Activated naive CD4-positive, alpha-beta T cell treated with anti-CD3 and anti-CD28 coated beads for 36 hours (primary cell): ENCODE measurements at regions of chr19 and their contacts with region 1.

Region 1: GRCh38 chr19:4139614-4140236 is 13.7 kb upstream of the CREB3L3 start:
- DNase-seq: peak; percentile 95
- H3K4me3 Mint-ChIP-seq: peak overlapping the region; percentile 30
- H3K27ac Mint-ChIP-seq: no peak overlapping the region
- H3K4me1 Mint-ChIP-seq: peaks cover 8% of the 10 kb centered on the region
- H3K27me3 Mint-ChIP-seq: peaks cover 2% of the 10 kb centered on the region

Region 2: DNA sequence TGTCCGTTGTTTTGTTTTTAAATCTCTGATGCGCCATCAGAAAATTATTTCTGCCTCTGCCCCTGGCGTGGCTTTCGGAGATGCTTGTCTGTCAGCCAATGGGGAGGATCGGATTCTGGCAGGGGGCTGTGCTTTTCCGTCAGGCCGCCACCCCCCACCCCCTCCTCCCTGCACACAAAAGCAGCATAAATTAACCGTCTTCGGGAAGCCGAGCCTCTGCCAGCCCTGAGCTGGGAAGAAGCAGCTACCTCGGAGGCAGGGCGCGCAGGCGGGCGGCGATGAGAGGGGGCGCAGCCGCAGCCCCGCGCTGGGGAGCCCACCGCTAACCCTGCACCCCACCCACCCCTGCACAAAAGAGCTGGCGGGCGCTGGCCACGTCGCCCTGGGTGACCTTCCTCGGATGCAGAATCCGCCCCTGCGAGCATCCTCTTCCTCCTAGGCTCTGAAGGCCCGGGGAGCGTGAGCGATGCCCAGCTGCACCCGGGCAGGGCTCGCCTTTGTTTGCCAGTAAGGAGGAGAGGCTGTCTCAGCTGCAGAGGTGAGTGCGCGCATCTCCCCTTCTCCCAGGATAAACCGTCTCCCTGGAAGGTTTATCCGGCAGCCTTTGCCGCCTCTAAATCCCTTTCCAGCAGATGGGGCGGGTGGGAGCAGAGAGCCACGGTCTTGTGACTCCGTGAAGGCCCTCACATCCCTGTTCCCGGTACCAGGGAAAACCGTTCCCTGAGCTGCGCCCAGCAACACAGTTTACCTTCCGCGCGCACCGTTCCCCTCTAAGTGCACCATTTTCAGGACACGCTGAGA is 259.1 kb before region 1 on chr19 and contains the start of gene ATCAY:
- CTCF ChIA-PET with region 1: no interaction called
- intact Hi-C with region 1: no loop called
- DNase-seq: no peak
- H3K4me3 Mint-ChIP-seq: no peak within 1 kb of the TSS
- H3K27ac Mint-ChIP-seq: no peak within 1 kb of the TSS
- H3K4me1 Mint-ChIP-seq: peaks cover 12% of the 10 kb centered on the region
- H3K27me3 Mint-ChIP-seq: peaks cover 40% of the 10 kb centered on the region
- total RNA-seq, gene ATCAY: 0.07 TPM in 1 of 2 experiments, not detected in the other

Region 3: DNA sequence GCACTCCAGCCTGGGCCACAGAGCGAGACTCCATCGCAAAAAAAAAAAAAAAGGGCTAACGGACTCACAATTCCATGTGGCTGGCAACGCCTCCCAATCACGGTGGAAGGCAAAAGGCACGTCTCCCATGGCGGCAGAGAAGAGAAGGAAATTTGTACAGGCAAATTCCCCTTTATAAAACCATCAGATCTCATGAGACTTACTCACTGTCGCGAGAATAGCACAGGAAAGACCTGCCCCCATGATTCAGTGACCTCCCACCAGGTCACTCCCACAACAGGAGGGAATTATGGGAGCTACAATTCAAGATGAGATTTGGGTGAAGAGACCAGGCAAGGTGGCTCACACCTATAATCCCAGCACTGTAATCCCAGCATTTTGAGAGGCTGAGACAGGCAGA is 225.5 kb before region 1 on chr19:
- CTCF ChIA-PET with region 1: no interaction called
- intact Hi-C with region 1: no loop called
- DNase-seq: no peak
- H3K4me3 Mint-ChIP-seq: no peak overlapping the region
- H3K27ac Mint-ChIP-seq: no peak overlapping the region
- H3K4me1 Mint-ChIP-seq: no peaks in the 10 kb centered on the region
- H3K27me3 Mint-ChIP-seq: peaks cover 4% of the 10 kb centered on the region

Region 4: GRCh38 chr19:4007021-4007835 is 132.5 kb before region 1 on chr19 and contains the start of gene PIAS4:
- CTCF ChIA-PET with region 1: interaction called, 12 read pairs
- intact Hi-C with region 1: no loop called
- DNase-seq: peak; percentile 96
- H3K4me3 Mint-ChIP-seq: peak within 1 kb of the TSS; percentile 84
- H3K27ac Mint-ChIP-seq: peak within 1 kb of the TSS; percentile 79
- H3K4me1 Mint-ChIP-seq: peaks cover 31% of the 10 kb centered on the region
- H3K27me3 Mint-ChIP-seq: no peaks in the 10 kb centered on the region
- total RNA-seq, gene PIAS4: 16.1 to 20.1 TPM

Region 5: GRCh38 chr19:4108767-4109625 is 30.7 kb before region 1 on chr19:
- CTCF ChIA-PET with region 1: interaction called, 11 read pairs
- intact Hi-C with region 1: no loop called
- DNase-seq: peak; percentile 76
- H3K4me3 Mint-ChIP-seq: no peak overlapping the region
- H3K27ac Mint-ChIP-seq: peak overlapping the region; percentile 78
- H3K4me1 Mint-ChIP-seq: peaks cover 50% of the 10 kb centered on the region
- H3K27me3 Mint-ChIP-seq: no peaks in the 10 kb centered on the region

Region 6: GRCh38 chr19:4123615-4124568 is 15.8 kb before region 1 on chr19 and contains the start of gene MAP2K2:
- CTCF ChIA-PET with region 1: interaction called, 11 read pairs
- intact Hi-C with region 1: no loop called
- DNase-seq: peak; percentile 96
- H3K4me3 Mint-ChIP-seq: peak within 1 kb of the TSS; percentile 85
- H3K27ac Mint-ChIP-seq: peak within 1 kb of the TSS; percentile 84
- H3K4me1 Mint-ChIP-seq: peaks cover 24% of the 10 kb centered on the region
- H3K27me3 Mint-ChIP-seq: no peaks in the 10 kb centered on the region
- total RNA-seq, gene MAP2K2: 101 to 103 TPM

Region 7: GRCh38 chr19:4164262-4164661 is 24.5 kb after region 1 on chr19:
- CTCF ChIA-PET with region 1: interaction called, 11 read pairs
- intact Hi-C with region 1: no loop called
- DNase-seq: no peak
- H3K4me3 Mint-ChIP-seq: no peak overlapping the region
- H3K27ac Mint-ChIP-seq: no peak overlapping the region
- H3K4me1 Mint-ChIP-seq: no peaks in the 10 kb centered on the region
- H3K27me3 Mint-ChIP-seq: peaks cover 8% of the 10 kb centered on the region

Region 8: DNA sequence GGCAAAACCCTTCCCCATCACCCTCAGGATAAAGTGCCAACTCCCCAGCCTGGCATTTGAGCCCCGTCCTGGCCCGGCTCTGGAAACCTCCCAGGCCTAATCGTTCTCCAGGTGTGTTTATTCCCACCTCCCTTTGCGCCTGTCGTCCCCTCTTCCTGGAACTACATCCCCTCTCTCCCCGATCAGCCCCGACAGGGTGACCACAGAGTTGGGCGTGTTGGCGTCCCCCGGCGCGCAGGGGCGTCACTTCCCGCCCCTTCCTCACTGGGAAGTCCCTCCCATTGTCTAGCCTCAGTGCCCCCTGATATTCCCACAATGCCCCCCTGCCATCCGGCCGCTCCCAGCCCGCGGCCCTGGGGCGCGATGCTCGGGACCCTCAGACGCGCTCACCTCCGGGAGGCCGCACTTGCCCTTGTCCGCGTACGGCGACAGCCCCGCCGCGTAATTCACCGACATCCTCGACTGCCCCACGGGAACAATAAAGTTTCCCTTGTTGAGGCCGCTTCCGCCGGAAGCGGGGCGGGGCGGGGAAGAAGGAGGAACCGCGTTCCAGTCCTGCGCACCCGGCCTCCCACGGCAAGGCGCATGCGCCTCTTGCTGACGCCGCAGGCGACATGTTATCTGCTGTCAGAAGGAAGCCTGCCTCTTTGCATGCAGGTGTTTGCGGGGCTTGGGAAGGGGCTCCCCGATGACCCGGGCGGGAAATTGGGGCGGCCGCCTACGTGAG is 42.5 kb after region 1 on chr19 and contains the starts of genes ANKRD24 and SIRT6:
- CTCF ChIA-PET with region 1: no interaction called
- intact Hi-C with region 1: loop called (anchors 5 kb)
- DNase-seq: peak; percentile 97
- H3K4me3 Mint-ChIP-seq: peak within 1 kb of the TSS; percentile 97
- H3K27ac Mint-ChIP-seq: peak within 1 kb of the TSS; percentile 93
- H3K4me1 Mint-ChIP-seq: peaks cover 34% of the 10 kb centered on the region
- H3K27me3 Mint-ChIP-seq: no peaks in the 10 kb centered on the region
- total RNA-seq, gene ANKRD24: 2.5 to 2.6 TPM
- total RNA-seq, gene SIRT6: 20.0 to 20.1 TPM

Region 9: DNA sequence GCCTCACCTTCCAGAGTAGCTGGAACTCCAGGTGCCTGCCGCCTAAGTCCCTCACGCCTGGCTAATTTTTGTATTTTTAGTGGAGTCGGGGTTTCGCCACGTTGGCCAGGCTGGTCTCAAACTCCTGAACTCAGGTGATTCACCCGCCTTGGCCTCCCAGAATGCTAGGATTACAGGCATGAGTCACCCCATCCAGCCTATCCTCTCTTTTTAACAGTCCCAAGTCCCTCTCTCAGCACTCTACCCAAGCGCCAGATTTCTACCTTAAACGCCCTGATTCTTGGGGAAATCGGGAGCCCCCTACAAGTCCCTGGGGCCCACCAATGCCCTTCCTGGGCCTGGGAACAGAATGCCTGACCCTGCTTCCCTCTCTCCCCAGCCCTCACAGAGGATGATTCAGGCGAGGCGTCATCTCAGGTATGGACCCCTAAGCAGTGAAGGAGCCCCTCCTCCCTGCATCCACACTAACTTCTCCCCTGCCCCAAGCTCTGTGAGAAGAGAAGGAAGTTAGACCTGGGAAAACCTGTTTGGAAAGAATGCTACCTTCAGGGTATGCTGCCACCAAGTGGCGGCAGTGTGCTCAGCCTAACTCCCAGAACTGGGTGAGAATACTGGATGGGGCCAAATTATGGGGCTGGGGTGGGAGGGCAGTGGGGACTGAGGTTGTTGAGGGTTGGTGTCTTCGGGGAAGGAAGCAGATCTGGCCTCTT is 68.8 kb after region 1 on chr19:
- CTCF ChIA-PET with region 1: interaction called, 4 read pairs
- intact Hi-C with region 1: loop called (anchors 1 kb)
- DNase-seq: no peak
- H3K4me3 Mint-ChIP-seq: no peak overlapping the region
- H3K27ac Mint-ChIP-seq: no peak overlapping the region
- H3K4me1 Mint-ChIP-seq: peaks cover 2% of the 10 kb centered on the region
- H3K27me3 Mint-ChIP-seq: no peaks in the 10 kb centered on the region